MCF 10A (cell line): ENCODE measurements at regions of chr1 and their contacts with region 1.

Region 1: GRCh38 chr1:200620273-200621131 is at the start of gene KIF14:
- DNase-seq: peak; percentile 99
- H3K4me3 Mint-ChIP-seq: peak within 1 kb of the TSS; percentile 96
- H3K27ac Mint-ChIP-seq: peak within 1 kb of the TSS; percentile 97
- H3K4me1 Mint-ChIP-seq: peaks cover 48% of the 10 kb centered on the region
- H3K27me3 Mint-ChIP-seq: no peaks in the 10 kb centered on the region
- CTCF ChIP-seq: no peak
- total RNA-seq, gene KIF14: 13.4 and 25.5 TPM in 2 replicates

Region 2: DNA sequence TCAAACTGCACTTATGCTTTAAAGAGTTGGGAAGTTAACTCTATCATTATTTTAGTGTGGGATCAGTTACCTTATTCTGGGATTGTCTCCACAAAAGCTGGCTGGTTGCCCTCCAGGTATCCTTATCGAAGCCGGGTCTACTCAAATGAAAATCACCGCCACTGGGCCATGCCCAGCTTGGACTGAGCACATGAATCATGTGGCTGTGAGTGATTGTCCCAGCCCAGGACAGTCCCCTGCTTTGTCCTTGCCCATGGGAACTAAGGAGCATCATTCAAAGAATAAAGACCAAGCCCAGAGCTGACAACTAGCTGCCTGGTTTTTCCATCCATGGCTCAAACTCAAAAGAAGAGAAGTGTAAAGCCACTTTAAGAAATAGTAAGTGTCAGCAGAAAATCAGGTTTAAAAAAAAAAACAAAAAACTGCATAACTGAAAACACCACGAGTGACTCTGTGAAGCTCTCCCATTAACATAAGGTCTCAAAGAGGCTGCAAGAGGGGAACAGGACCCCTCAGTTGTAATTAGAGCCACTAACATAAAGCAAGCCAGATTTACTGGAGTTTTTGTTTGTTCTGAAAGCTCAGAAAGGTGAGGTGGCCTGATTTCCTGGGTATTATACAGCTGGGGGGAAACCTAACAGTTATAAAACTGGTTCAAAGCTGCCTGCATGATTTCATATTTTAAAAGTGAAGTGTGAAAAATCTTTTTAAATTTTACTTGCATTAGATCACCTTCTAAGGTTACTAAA is 91.5 kb before region 1 on chr1:
- CTCF ChIA-PET with region 1: no interaction called
- POLR2A ChIA-PET with region 1: no interaction called
- intact Hi-C with region 1: no loop called
- DNase-seq: no peak
- H3K4me3 Mint-ChIP-seq: no peak overlapping the region
- H3K27ac Mint-ChIP-seq: no peak overlapping the region
- H3K4me1 Mint-ChIP-seq: no peaks in the 10 kb centered on the region
- H3K27me3 Mint-ChIP-seq: no peaks in the 10 kb centered on the region
- CTCF ChIP-seq: no peak

Region 3: GRCh38 chr1:200558866-200559459 is 61.5 kb before region 1 on chr1:
- CTCF ChIA-PET with region 1: interaction called, 19 read pairs
- POLR2A ChIA-PET with region 1: interaction called, 4 read pairs
- intact Hi-C with region 1: no loop called
- DNase-seq: peak; percentile 62
- H3K4me3 Mint-ChIP-seq: no peak overlapping the region
- H3K27ac Mint-ChIP-seq: peak overlapping the region; percentile 28
- H3K4me1 Mint-ChIP-seq: peaks cover 6% of the 10 kb centered on the region
- H3K27me3 Mint-ChIP-seq: no peaks in the 10 kb centered on the region
- CTCF ChIP-seq: peak; percentile 81

Region 4: DNA sequence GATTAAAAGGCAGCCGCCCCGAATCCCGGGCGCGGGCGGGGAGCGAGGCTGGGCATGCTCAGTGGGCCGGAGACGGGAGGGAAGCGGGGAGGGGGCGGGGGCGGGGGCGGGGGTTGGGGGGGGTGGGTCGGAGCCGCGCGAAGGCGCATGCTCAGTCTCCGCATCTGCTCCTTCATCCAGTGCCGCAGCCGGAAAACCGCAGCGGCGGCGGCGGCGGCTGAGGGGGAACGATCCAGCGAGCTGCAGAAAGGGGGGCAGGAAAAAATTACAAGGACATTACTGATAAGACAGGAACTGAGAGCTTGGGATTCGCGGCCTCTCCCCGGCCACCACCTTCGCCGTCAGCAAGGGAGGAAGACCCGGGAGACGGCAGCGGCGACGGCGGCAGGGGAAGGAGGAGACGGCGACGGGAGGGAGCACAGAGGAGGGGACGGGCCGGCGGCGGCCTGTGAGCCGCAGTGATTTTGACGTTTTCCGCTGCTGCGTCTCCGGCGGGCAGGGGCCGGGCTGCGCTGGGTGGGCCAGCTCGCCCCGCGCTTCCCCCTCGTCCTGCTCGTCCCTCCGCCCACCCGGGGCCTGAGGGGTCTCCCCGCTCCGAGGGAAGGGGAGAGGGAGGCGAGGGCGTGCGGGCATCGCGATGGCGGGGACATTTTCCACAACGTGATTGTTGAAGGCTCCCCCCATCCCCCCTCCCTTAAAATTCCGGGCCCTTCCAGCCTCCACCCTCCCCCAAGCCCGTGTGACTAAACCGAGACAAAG is 118.4 kb after region 1 on chr1 and contains the start of gene CAMSAP2:
- CTCF ChIA-PET with region 1: interaction called, 18 read pairs
- POLR2A ChIA-PET with region 1: interaction called, 27 read pairs
- intact Hi-C with region 1: loop called (anchors 1 kb)
- DNase-seq: peak; percentile 95
- H3K4me3 Mint-ChIP-seq: peak within 1 kb of the TSS; percentile 84
- H3K27ac Mint-ChIP-seq: peak within 1 kb of the TSS; percentile 95
- H3K4me1 Mint-ChIP-seq: peaks cover 26% of the 10 kb centered on the region
- H3K27me3 Mint-ChIP-seq: no peaks in the 10 kb centered on the region
- CTCF ChIP-seq: no peak
- total RNA-seq, gene CAMSAP2: 144 and 209 TPM in 2 replicates

Region 5: GRCh38 chr1:200780545-200781369 is 160.3 kb after region 1 on chr1:
- CTCF ChIA-PET with region 1: interaction called, 11 read pairs
- POLR2A ChIA-PET with region 1: interaction called, 6 read pairs
- intact Hi-C with region 1: no loop called
- DNase-seq: peak; percentile 38
- H3K4me3 Mint-ChIP-seq: peak overlapping the region; percentile 70
- H3K27ac Mint-ChIP-seq: peak overlapping the region; percentile 88
- H3K4me1 Mint-ChIP-seq: peaks cover 41% of the 10 kb centered on the region
- H3K27me3 Mint-ChIP-seq: no peaks in the 10 kb centered on the region
- CTCF ChIP-seq: no peak

Region 6: GRCh38 chr1:200831091-200831490 is 210.6 kb after region 1 on chr1:
- CTCF ChIA-PET with region 1: interaction called, 84 read pairs
- POLR2A ChIA-PET with region 1: interaction called, 11 read pairs
- intact Hi-C with region 1: no loop called
- DNase-seq: no peak
- H3K4me3 Mint-ChIP-seq: no peak overlapping the region
- H3K27ac Mint-ChIP-seq: peak overlapping the region; percentile 30
- H3K4me1 Mint-ChIP-seq: peaks cover 7% of the 10 kb centered on the region
- H3K27me3 Mint-ChIP-seq: no peaks in the 10 kb centered on the region
- CTCF ChIP-seq: no peak

Region 7: GRCh38 chr1:201042779-201043461 is 422.4 kb after region 1 on chr1:
- CTCF ChIA-PET with region 1: interaction called, 20 read pairs
- POLR2A ChIA-PET with region 1: interaction called, 5 read pairs
- intact Hi-C with region 1: loop called (anchors 1 kb)
- DNase-seq: peak; percentile 89
- H3K4me3 Mint-ChIP-seq: no peak overlapping the region
- H3K27ac Mint-ChIP-seq: no peak overlapping the region
- H3K4me1 Mint-ChIP-seq: no peaks in the 10 kb centered on the region
- H3K27me3 Mint-ChIP-seq: peaks cover 33% of the 10 kb centered on the region
- CTCF ChIP-seq: peak; percentile 98